ENCODE measurements at regions of chr2 and their contacts with region 1.

Region 1: GRCh38 chr2:69643602-69644505 is at the start of gene AAK1:
- DNase-seq: peak; percentile 82 to 98 (median 89)

Region 2: DNA sequence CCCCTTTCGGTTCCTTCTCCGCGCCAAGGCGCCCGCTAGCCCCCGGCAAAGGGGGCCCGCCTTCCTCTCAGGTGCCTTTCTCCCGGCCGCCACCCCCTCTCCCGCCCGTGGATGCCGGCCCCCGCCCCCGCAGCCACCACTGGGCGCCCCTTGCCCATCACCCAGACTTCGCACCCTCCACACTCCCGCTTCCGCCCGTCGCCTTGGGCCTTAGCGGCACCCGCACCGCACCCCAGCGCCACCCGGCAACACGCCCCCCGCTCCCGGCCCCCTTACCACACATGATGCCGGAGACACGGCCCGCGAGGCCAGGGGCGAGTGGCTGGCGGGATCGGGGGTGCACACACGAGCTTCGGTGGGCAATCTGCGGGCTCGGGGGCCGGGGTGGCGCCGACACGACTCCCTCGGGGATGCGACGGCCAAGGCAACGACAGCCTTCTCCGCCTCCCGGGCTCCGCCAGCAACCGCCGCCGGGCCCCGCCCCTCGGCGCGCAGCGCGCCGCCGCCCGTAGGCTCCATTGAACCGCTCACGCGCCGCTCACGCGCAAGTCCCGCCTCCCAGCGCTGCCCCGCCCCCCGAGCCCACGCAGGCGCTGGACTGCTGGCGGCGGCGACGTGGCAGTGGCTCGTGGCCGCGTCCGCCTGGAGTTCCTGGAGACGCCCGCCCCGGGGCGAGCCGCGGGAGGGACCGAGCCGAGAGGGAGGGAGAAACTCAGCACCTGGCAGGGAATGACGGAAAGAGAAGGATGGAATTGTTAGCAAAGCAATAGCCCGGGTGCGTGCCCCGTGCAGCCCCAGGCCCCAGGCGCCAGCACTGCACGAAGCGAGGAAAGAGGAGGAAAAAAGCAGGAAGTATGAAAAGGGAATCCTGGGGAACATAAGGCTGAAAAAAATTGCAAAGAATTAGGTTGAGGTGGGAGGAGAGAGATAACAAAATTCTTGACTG is 256.8 kb before region 1 on chr2 and contains the start of gene GFPT1:
- intact Hi-C with region 1: loop called (anchors 10 kb)
- DNase-seq: peak; percentile 84 to 99 (median 92)

Region 3: DNA sequence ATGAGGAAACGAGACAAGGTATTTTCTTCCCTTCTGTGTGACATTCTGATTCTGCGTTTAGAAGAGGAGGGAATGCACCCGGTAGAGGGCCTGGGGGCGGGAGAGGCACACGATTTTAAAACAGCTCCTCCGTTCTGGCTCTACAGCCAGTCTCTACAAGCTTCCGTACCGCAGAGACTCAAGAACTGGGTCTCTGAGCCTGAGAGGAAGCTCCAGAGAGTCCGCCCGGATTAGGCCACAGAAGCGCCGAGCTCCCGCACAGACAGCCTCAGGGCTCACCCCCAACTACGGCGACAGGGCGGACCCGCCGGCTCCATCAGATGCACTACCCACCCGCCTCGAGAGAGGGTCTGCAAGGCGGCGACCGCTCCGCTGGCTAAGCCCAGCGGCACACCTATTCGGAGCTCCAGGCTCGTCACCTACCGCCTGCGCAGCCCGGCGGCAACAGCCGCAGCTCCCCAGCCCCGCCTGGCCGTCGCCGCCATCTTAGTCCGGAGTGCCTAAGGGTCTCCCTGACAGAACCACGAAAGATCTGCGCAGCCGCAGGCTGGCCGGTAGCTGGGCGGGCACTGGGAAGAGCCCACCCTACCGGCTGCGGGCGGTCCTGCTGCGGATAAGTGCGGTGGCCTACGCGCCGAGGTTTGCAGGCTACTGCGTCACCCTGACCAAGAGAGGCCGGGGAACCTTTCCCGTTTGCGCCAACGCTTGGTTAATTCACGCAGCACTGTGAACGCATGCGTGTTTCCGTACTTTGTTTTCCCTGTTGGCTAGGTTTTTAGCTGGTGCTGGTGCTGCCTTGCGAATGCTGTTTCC is 206.7 kb before region 1 on chr2 and contains the start of gene NFU1:
- intact Hi-C with region 1: loop called (anchors 2 kb)
- DNase-seq: peak; percentile 92 to 99 (median 94)

Region 4: DNA sequence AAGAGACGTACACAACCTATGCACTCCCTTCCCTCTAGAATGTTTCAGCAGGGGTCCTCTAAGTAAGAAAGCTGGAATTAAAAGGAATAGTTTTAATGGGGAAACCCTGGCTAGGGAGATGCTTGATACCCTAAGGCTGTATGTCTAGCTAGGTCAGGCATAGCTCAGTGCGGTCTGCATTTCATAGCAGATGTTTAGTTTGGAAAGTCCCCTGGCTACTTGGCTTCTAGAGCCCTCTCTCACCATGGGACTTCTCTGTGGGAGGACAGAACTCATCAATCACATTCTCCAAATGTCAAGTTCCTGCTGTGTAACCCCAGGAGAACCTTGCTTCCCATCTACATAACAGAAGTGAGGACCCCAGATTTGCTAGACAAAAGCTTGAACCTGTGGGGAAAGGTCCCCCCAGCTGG is 74.0 kb after region 1 on chr2:
- intact Hi-C with region 1: loop called (anchors 10 kb)
- DNase-seq: no peak

Region 5: DNA sequence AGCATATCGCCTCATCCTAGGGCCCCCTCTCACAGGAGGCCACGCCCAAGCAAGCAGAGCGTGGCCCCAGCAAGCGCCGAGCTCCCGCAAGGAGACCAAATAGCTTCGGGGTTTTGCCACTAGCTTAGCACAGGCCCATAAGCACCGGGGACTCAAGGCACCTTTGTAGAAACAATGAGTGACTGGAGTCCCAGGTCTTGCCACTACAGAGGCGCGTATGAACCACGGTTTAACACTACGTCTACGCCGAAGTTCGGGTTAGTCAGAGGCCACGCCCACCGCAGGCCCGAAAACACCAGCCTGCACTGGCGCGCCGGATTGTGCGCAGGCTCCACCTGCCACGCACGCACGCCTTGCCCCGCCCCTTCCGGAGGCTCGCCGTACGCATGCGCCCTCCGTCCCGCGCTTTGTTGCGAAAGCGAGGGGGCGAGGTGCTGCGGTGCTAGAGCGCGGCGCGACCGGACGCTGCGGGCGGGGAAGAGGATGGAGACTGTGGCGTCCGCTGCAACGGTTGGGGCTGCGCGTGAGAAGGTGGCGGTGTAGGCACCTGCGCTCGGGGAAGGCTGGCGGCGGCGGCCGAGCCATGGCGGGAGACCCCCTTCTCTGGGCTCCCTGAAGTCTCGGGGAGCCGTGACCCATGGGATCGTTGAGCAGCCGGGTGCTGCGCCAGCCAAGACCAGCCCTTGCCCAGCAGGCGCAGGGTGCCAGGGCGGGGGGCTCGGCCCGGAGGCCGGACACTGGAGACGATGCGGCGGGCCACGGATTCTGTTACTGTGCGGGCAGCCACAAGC is 185.6 kb after region 1 on chr2 and contains the start of gene GMCL1:
- intact Hi-C with region 1: loop called (anchors 10 kb)
- DNase-seq: peak; percentile 93 to 99 (median 95)

Measured in posterior cingulate gyrus (tissue), 11 donors.